ENCODE measurements at regions of chr16 and their contacts with region 1.

Region 1: GRCh38 chr16:58129097-58129936 is at the start of gene CFAP20:
- DNase-seq: peak; percentile 100
- H3K4me3 ChIP-seq: peak within 1 kb of the TSS; percentile 64 to 72 (median 72)
- H3K27ac ChIP-seq: peak within 1 kb of the TSS; percentile 67
- H3K4me1 ChIP-seq: peaks cover 22% of the 10 kb centered on the region
- H3K27me3 ChIP-seq: no peaks in the 10 kb centered on the region
- CTCF ChIP-seq: no peak
- POLR2A ChIP-seq: peak; percentile 68
- total RNA-seq, gene CFAP20: 44.7 and 46.8 TPM in 2 replicates

Region 2: DNA sequence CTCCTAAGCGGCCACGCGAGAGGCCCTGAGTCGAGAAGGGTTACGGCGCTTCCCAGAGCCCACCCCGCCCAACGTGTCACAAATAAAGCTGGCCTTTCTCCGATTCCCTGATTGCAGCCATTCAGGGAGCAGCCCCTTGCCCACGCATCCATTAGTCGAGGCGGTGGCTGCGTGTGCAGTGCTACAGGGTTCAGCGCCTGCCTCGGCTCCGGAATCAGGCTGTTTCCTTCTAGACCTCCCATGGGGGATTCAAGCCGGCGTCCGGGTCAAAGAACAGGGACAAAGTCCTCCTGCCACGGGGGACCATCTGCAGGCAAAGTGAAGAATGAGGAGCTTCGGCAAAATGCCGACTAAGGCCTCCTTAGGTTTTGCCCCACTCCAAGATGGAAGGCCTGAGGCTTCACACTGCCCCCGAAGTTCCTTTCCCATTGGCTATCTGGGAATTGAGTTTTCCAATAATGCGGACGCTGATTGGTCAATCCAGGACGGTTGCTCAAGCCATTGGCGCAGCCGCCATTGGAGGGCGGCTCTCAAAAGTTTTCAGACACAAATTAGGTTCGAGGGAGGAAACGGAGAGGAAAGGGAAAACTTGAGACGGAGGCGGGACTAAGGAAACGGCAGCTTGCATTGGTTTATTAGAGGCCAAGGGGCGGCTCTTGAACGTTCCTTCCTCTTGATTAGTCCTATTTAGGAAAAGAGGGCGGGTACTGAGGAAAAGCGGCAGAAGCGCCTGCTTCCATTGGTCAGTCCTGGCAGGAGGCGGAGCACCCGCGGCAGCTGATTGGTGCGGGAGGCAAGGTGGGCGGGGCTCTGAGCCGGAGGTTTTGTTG is 394.2 kb before region 1 on chr16:
- CTCF ChIA-PET with region 1: no interaction called
- POLR2A ChIA-PET with region 1: no interaction called
- dilution Hi-C with region 1: no loop called
- intact Hi-C with region 1: loop called (anchors 10 kb)
- DNase-seq: peak; percentile 100
- H3K4me3 ChIP-seq: peak overlapping the region; percentile 72 to 93 (median 74)
- H3K27ac ChIP-seq: peak overlapping the region; percentile 81
- H3K4me1 ChIP-seq: peaks cover 19% of the 10 kb centered on the region
- H3K27me3 ChIP-seq: no peaks in the 10 kb centered on the region
- CTCF ChIP-seq: no peak
- POLR2A ChIP-seq: peak; percentile 58

Region 3: GRCh38 chr16:57899771-57900661 is 229.3 kb before region 1 on chr16:
- CTCF ChIA-PET with region 1: interaction called, 5 read pairs
- POLR2A ChIA-PET with region 1: no interaction called
- dilution Hi-C with region 1: no loop called
- intact Hi-C with region 1: loop called (anchors 2 kb)
- DNase-seq: peak; percentile 67
- H3K4me3 ChIP-seq: no peak overlapping the region
- H3K27ac ChIP-seq: no peak overlapping the region
- H3K4me1 ChIP-seq: no peaks in the 10 kb centered on the region
- H3K27me3 ChIP-seq: peaks cover 0 to 3% of the 10 kb centered on the region in 2 experiments
- CTCF ChIP-seq: peak; percentile 85 to 87
- POLR2A ChIP-seq: no peak

Region 4: DNA sequence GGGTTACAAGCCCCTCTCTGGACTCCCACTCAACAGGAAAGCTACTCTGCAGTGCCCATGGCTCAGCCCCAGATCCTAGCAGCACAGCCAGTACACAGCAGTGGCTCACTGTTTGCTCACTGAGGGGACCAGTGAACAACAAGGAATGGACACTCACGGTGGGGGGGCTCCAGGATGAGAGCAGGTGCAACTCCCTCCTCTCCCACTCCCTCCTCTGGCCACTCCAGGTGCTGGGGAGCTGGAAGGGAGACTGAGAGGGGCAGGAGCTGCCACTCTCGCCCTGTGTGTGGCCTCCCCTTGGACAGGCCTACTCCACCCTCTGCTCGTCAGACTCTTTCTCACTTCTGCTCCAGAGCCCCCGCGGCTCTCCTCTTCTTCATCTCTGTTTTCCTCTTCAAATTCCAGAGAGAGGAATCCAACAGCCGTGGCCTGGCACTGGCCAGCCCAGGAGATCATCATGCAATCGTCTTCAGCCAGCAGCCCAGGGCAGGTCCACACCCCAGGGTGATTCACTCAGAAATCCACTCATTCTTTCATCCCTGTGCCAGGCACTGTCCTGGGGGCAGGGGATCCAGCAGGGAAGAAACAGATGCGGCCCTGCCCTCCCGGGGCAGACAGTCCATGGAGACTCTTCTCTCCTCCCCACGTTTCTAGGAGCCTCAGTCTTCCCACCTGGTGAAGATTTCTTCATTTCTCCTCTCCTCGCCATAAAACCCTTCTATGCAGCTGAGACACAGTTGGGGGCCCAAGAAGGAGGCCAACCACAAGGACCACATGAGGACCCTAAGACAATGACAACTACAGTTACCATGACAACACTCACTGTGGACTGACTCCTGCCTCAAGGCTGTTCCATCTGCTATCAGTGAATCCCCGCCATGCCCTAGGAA is 30.9 kb before region 1 on chr16:
- CTCF ChIA-PET with region 1: interaction called, 6 read pairs
- POLR2A ChIA-PET with region 1: no interaction called
- dilution Hi-C with region 1: no loop called
- intact Hi-C with region 1: loop called (anchors 2 kb)
- DNase-seq: no peak
- H3K4me3 ChIP-seq: no peak overlapping the region
- H3K27ac ChIP-seq: no peak overlapping the region
- H3K4me1 ChIP-seq: no peaks in the 10 kb centered on the region
- H3K27me3 ChIP-seq: no peaks in the 10 kb centered on the region
- CTCF ChIP-seq: no peak
- POLR2A ChIP-seq: no peak

Region 5: DNA sequence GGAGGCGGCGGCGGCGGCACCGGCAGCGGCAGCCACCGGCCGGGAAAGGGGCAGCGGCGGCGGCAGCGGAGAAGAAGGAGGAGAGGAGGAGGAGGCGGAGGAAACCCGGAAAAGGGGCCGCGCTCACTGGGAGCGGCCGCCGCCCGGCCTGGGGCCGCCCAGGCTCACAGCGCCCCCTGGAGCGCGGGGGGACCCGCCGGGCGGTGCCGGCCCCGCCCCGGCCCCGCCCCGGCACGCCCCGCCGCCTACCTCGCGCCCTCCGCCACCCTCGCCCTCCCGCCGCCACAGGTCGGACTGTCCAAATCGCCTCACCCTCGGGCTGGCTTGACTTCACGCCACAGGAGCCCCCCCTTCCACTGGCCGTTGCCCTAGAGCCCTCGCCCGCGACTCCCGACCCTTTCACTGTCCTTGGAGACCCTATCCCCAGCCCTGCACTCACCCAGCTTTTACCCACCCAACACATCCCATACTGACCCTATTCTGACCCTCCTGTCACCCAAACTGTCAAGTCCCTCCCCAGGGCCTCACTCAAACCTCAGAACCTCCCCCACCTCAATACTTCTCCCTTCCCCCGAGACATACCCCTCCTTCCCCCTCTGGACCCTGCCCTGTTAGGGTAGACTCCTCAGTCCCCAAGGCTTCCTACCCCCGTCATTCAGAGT is 68.8 kb after region 1 on chr16 and contains the start of gene CSNK2A2:
- CTCF ChIA-PET with region 1: interaction called, 4 read pairs
- POLR2A ChIA-PET with region 1: interaction called, 3 read pairs
- dilution Hi-C with region 1: no loop called
- intact Hi-C with region 1: loop called (anchors 2 kb)
- DNase-seq: no peak
- H3K4me3 ChIP-seq: peak within 1 kb of the TSS; percentile 51 to 95 (median 77)
- H3K27ac ChIP-seq: peak within 1 kb of the TSS; percentile 33
- H3K4me1 ChIP-seq: peaks cover 17% of the 10 kb centered on the region
- H3K27me3 ChIP-seq: peaks cover 0 to 6% of the 10 kb centered on the region in 2 experiments
- CTCF ChIP-seq: peak; percentile 25 to 58
- POLR2A ChIP-seq: no peak
- total RNA-seq, gene CSNK2A2: 113 and 125 TPM in 2 replicates

Measured in endothelial cell of umbilical vein (primary cell).